Psoas muscle (tissue), 8 donors: ENCODE measurements at regions of chr20 and their contacts with region 1.

Region 1: GRCh38 chr20:40902661-40903060 is 126.0 kb upstream of the TOP1 start:
- DNase-seq: no peak
- ATAC-seq: no peak
- H3K4me3 ChIP-seq: no peak overlapping the region
- H3K27ac ChIP-seq: no peak overlapping the region
- H3K4me1 ChIP-seq: no peaks in the 10 kb centered on the region
- H3K27me3 ChIP-seq: no peaks in the 10 kb centered on the region
- CTCF ChIP-seq: no peak

Region 2: GRCh38 chr20:40414843-40415615 is 487.6 kb before region 1 on chr20:
- intact Hi-C with region 1: no loop called
- DNase-seq: no peak
- ATAC-seq: no peak
- H3K4me3 ChIP-seq: no peak overlapping the region
- H3K27ac ChIP-seq: no peak overlapping the region
- H3K4me1 ChIP-seq: no peaks in the 10 kb centered on the region
- H3K27me3 ChIP-seq: peaks cover 0 to 4% (median 0%) of the 10 kb centered on the region in 3 donors
- CTCF ChIP-seq: no peak

Region 3: GRCh38 chr20:40931410-40932044 is 28.9 kb after region 1 on chr20:
- intact Hi-C with region 1: loop called in 1 of 2 experiments (anchors 2 kb)
- DNase-seq: no peak
- ATAC-seq: no peak
- H3K4me3 ChIP-seq: no peak overlapping the region
- H3K27ac ChIP-seq: no peak overlapping the region
- H3K4me1 ChIP-seq: no peaks in the 10 kb centered on the region
- H3K27me3 ChIP-seq: no peaks in the 10 kb centered on the region
- CTCF ChIP-seq: no peak